Posterior vena cava (tissue), 2 donors: ENCODE measurements at regions of chr6 and their contacts with region 1.

Region 1: GRCh38 chr6:73342174-73342573 is 11.9 kb downstream of the DPPA5 start:
- DNase-seq: no peak

Region 2: GRCh38 chr6:73314577-73315492 is 27.3 kb before region 1 on chr6:
- intact Hi-C with region 1: loop called in 1 of 2 experiments (anchors 1 kb)
- DNase-seq: no peak

Region 3: GRCh38 chr6:73363537-73363875 is 21.3 kb after region 1 on chr6:
- intact Hi-C with region 1: no loop called
- DNase-seq: no peak